Activated CD4-positive, alpha-beta T cell treated with anti-CD3 and anti-CD28 coated beads for 36 hours (primary cell): ENCODE measurements at regions of chr15 and their contacts with region 1.

Region 1: DNA sequence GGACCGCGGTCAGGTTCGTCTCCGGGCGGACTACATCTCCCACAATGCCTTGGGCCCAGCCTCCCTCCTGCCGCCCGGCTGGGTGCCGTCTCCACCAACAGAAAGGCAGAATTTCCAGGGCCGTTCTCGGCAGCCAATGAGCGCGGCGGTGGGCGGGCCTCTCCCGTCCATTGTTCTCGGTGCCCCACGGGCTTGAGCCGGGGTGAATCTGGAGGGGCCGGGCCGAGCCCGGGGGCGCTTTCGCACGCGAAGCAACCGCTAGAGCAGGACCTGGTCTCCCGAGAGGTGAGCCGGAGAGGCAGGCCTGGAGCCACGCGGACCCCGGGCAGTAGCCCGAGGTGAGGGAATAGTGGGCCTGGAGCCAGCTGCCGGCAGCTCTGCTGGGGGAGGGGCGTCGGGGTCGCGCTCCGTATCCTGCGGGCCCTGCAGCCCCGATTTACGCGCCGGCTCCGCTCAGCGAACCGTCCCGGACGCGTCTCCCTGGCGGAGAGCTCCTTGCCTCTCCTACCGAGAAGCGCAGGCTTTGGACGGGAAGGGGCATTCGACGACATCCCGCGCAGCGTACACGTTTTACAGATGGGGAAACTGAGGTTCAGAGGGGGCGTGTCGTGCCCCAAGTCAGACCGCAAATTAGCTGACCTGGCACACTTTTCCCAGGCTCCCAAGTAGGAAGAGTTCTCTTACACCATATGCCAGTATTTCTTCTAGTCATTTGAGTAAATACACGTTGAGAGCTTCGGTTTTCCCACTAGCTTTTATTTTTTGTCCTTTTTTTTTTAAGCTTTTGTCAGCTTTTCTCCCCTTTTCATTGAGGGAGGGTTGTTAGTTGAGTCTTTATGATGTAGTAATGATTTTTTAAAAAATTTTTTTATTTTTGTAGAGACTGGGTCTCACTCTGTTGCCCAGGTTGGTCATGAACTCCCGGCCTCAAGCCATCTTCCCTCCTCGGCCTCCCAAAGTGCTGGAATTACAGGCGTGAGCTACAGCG is at the start of gene ZSCAN2:
- DNase-seq: peak; percentile 97
- ATAC-seq: peak; percentile 96
- H3K4me3 Mint-ChIP-seq: peak within 1 kb of the TSS; percentile 82
- H3K27ac Mint-ChIP-seq: peak within 1 kb of the TSS; percentile 58
- H3K4me1 Mint-ChIP-seq: peaks cover 65% of the 10 kb centered on the region
- H3K27me3 Mint-ChIP-seq: no peaks in the 10 kb centered on the region
- total RNA-seq, gene ZSCAN2: 5.1 to 5.4 TPM

Region 2: GRCh38 chr15:84588053-84588874 is 12.9 kb before region 1 on chr15:
- CTCF ChIA-PET with region 1: interaction called, 17 read pairs
- POLR2A ChIA-PET with region 1: no interaction called
- intact Hi-C with region 1: no loop called
- DNase-seq: peak; percentile 93
- ATAC-seq: peak; percentile 100
- H3K4me3 Mint-ChIP-seq: peak overlapping the region; percentile 35
- H3K27ac Mint-ChIP-seq: no peak overlapping the region
- H3K4me1 Mint-ChIP-seq: peaks cover 2% of the 10 kb centered on the region
- H3K27me3 Mint-ChIP-seq: no peaks in the 10 kb centered on the region

Region 3: GRCh38 chr15:84716036-84716799 is 115.1 kb after region 1 on chr15 and contains the start of gene SEC11A:
- CTCF ChIA-PET with region 1: interaction called, 5 read pairs
- POLR2A ChIA-PET with region 1: no interaction called
- intact Hi-C with region 1: loop called in 1 of 2 experiments (anchors 1 kb)
- DNase-seq: peak; percentile 94
- ATAC-seq: peak; percentile 89
- H3K4me3 Mint-ChIP-seq: peak within 1 kb of the TSS; percentile 98
- H3K27ac Mint-ChIP-seq: peak within 1 kb of the TSS; percentile 97
- H3K4me1 Mint-ChIP-seq: peaks cover 55% of the 10 kb centered on the region
- H3K27me3 Mint-ChIP-seq: no peaks in the 10 kb centered on the region
- total RNA-seq, gene SEC11A: 66.6 to 111 TPM

Region 4: GRCh38 chr15:84761607-84762131 is 160.5 kb after region 1 on chr15:
- CTCF ChIA-PET with region 1: interaction called, 4 read pairs
- POLR2A ChIA-PET with region 1: no interaction called
- intact Hi-C with region 1: loop called (anchors 5 kb)
- DNase-seq: peak; percentile 28
- ATAC-seq: peak; percentile 83
- H3K4me3 Mint-ChIP-seq: no peak overlapping the region
- H3K27ac Mint-ChIP-seq: no peak overlapping the region
- H3K4me1 Mint-ChIP-seq: peaks cover 14% of the 10 kb centered on the region
- H3K27me3 Mint-ChIP-seq: no peaks in the 10 kb centered on the region

Region 5: DNA sequence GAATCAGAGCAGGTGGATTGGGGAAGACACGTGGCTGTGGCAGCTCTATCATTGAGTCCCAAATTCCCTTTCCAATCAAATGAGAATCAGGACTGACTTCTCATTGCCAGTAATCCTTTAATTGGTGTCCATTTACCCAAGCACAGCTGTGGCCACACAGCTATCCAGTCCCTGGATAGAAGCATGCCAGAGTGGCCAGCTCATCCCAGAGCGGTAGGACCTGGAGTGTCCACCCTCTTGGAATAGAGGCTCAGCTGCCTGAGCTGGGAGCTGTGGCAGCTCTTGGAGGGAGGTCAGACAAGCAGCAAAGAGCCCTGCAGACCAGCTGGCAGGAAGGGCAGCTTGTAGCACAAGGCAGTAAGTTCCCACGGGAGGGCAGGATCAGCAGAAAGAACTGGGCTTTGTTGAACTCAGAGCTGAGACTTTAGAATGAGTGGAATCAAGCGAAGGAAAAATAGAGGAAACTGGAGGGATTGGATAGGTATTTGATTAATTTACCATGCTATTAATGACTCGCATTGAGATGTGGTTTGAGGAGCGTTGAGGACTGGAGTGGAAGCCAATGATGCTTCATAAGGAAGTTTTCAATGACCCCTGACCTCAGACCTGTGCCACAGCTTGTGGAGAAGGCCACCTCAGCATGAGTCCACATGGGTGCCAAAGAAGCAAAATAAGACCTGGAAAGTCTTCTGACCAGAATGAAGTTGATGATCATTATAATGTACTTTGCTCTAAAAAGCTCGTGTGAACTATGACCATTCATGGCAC is 209.1 kb after region 1 on chr15:
- CTCF ChIA-PET with region 1: no interaction called
- POLR2A ChIA-PET with region 1: no interaction called
- intact Hi-C with region 1: no loop called
- DNase-seq: no peak
- ATAC-seq: no peak
- H3K4me3 Mint-ChIP-seq: no peak overlapping the region
- H3K27ac Mint-ChIP-seq: no peak overlapping the region
- H3K4me1 Mint-ChIP-seq: no peaks in the 10 kb centered on the region
- H3K27me3 Mint-ChIP-seq: peaks cover 2% of the 10 kb centered on the region

Region 6: GRCh38 chr15:84874981-84875699 is 274.0 kb after region 1 on chr15:
- CTCF ChIA-PET with region 1: interaction called, 12 read pairs
- POLR2A ChIA-PET with region 1: no interaction called
- intact Hi-C with region 1: loop called in 1 of 2 experiments (anchors 1 kb)
- DNase-seq: no peak
- ATAC-seq: no peak
- H3K4me3 Mint-ChIP-seq: no peak overlapping the region
- H3K27ac Mint-ChIP-seq: no peak overlapping the region
- H3K4me1 Mint-ChIP-seq: no peaks in the 10 kb centered on the region
- H3K27me3 Mint-ChIP-seq: no peaks in the 10 kb centered on the region

Region 7: GRCh38 chr15:84929744-84930371 is 328.7 kb after region 1 on chr15:
- CTCF ChIA-PET with region 1: interaction called, 11 read pairs
- POLR2A ChIA-PET with region 1: interaction called, 3 read pairs
- intact Hi-C with region 1: loop called (anchors 1 kb)
- DNase-seq: peak; percentile 44
- ATAC-seq: peak; percentile 40
- H3K4me3 Mint-ChIP-seq: no peak overlapping the region
- H3K27ac Mint-ChIP-seq: no peak overlapping the region
- H3K4me1 Mint-ChIP-seq: peaks cover 5% of the 10 kb centered on the region
- H3K27me3 Mint-ChIP-seq: no peaks in the 10 kb centered on the region